ENCODE measurements at regions of chr6 and their contacts with region 1.

Region 1: DNA sequence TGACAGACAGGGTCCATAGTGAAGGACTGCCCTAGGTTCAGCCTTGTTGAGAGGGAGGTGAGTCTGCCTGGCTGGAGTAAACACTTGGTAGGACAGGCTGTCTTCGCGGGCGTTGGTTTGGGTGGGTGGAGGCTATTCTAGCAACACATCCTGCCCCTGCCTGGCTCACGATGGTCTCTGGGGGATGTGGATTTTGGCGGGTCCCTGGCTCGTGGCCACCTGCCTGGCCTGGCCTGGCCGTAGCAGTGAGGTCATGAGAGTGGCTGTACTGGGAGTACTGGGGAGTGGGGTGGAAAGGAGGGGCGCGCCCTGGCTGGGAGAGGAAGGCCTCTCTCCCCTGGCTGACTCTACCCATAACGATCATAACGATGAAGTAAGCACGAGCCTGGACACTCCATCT is 30.2 kb upstream of the MRPS18A start:
- DNase-seq: peak; percentile 87
- ATAC-seq: peak; percentile 87

Region 2: DNA sequence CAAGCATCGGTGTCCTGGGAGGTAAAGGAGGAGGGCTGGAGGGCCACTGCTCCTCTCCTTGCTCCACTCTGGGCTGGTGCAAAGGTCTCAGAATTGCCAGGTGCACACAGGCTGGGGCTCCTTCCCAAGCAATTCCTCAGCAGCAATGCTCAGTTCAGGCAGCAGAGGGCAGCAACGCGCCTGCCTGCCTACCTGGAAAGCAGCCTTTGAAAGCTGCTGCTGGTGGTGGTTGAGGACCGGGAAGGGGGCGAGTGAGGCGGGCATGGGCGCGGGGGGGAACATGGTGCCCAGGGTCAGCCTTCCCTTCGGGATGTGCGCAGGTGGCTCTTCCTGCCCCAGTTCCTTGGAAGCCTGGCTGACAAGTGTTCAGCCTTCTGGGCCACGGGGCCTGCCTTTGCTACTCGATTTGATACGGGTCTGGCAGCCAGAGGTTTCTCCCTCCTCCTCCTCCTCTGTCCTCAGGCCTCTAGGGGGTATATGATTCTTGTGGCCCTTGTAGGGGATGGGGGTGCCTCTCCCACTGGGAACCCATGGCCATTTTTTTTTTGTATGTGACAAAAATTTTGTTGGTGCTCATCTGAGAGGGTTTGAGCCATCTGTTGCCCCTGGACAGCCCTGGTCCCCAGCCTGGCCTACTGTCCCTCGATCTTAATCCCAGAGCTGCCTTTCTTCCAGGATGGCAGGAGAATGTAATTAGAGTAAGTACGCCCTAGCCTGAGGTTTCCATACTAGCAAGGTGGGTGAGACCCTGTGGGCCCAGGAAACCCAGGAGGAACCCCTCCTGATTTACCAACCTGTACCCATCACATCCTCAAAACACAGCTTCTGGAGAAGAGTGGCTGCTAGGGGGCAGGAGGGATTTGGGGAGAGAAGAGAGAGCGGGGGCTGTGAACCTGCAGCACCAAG is 50.3 kb before region 1 on chr6:
- intact Hi-C with region 1: loop called (anchors 2 kb)
- DNase-seq: peak; percentile 89
- ATAC-seq: peak; percentile 41

Region 3: GRCh38 chr6:43687437-43688347 is 30.1 kb before region 1 on chr6 and contains the start of gene MRPS18A:
- intact Hi-C with region 1: loop called (anchors 2 kb)
- DNase-seq: peak; percentile 94
- ATAC-seq: peak; percentile 93
- total RNA-seq, gene MRPS18A: 43.1 TPM

Measured in Right ventricle myocardium inferior (tissue), 1 donor.